KBM-7 (cell line): ENCODE measurements at regions of chr6 and their contacts with region 1.

Region 1: GRCh38 chr6:161370880-161371279 is 97.0 kb upstream of the AGPAT4 start:
- DNase-seq: peak; percentile 67

Region 2: DNA sequence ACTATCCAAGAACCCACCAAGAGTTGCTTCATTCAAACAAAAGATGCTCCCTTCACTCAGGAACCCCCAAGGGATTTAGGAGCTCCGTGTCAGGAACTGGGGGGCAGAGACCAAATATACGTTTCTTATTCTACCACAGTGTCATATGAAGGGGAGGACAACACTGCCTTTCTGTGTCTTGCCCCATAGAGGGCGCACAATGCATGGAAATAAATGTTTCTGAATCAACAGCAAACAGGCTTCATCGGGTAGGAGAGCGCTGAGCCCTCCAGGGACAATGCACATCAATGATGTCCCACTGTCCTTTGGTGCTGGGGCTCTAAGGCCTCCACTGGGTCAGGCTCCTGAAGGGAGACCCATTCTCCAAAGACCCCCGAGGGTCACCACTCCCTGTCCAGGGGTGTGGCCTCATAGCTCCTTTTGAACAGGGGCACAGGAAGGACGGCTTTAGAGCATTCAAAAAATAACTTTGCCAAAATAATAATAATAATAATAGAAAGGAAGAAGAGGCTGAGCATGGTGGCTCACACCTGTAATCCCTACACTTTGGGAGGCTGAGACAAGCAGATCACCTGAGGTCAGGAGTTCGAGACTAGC is 637.7 kb before region 1 on chr6:
- in situ Hi-C with region 1: loop called (anchors 25 kb)
- DNase-seq: peak; percentile 33

Region 3: DNA sequence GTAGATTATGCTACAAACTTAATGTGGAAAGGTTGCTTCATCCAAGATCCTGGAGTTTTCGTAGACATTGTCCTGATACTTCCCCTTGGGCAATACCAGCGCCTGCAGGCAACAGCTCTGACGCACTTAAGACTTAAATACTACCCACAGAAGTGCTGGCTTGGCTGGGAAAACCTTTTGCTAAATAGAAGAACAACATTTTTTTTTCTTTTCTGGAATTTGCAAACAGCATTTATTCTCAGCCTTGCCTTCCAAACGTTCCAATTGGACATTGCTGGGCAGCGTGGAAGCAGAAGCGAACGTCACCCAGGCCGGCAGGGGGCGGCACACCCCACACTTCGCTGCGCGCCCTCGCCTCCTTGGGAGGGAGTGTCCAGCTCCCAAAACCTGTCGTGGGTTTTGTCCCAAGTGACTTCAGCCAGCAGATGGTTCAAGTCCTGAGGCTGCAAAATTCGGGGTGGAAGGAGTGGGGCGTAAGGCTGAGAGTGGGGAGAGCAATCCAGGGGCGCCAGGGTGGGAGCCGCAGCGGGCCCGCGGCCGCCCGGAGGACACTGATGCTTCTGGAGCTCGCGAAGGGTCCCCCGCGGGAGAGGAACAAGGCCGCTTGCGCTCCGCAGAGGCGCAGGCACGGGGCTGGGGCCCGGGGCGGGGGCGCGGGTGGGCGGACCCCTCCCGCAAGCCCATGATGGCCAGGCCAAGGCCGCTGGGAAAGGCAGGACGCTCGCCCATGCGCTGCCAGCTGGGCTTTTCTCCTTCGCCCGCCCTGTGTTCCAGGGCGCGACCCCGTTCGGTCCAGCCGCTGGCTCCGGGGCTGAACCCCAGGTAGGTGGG is 440.1 kb before region 1 on chr6:
- in situ Hi-C with region 1: loop called (anchors 25 kb)
- DNase-seq: peak; percentile 70

Region 4: GRCh38 chr6:161139766-161140553 is 230.9 kb before region 1 on chr6:
- in situ Hi-C with region 1: loop called (anchors 25 kb)
- DNase-seq: no peak

Region 5: DNA sequence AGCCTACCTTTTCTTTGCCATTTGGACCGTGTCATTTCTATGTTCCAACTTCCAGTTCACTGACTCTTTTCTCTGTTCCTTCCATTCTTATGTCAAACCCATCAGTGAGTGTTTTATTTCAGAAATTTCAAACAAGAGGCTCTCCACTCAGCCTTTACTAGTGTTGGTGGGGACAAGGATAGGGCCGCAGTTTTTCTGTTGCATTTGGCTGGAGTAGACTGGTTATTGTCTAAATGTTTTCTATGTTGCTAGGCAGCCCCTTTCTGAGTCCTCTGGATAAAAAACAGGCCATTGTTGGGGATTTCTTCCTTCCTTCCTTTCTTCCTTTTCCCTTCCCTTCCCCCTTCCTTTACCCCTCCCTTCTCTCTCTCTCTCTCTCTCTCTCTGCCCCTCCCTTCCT is 1068.1 kb after region 1 on chr6:
- in situ Hi-C with region 1: no loop called
- DNase-seq: no peak